ENCODE measurements at regions of chr7 and their contacts with region 1.

Region 1: DNA sequence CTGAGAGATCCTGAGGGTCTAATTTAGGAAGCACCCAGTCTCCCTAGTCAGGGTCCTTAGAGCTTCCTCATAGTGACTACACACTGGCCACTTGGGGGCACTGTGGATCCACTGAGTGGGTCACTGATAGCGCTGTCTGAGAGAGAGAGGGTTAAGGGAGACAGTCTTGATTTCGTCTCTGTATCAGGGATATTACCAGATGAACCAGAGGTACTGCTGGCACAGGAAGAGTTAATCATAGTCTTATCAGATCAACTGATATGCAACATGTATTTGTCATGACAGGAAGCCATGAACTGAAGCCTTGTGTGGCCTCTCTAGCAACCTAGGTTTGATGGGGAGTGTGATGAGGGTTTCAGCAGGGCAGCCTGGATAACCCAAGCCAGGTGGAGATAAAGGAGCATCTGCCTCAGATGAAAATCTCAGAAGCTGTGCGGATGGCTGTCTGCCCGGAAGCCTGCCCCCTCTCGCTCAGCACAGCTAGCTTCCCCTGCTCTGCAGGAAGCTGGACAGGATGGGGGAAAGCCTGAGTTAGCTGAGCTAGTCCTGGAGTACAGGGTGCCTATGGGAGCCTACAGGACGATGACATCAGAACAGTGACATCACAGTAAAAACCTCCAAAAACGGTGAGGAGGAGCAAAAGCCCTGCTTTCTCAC is 214.0 kb upstream of the PRSS1 start:
- DNase-seq: peak; percentile 76
- ATAC-seq: peak; percentile 100
- H3K4me3 ChIP-seq: no peak overlapping the region
- H3K27ac ChIP-seq: no peak overlapping the region
- H3K4me1 ChIP-seq: peaks cover 3 to 17% of the 10 kb centered on the region in 2 experiments; a peak in 3 of 4 replicates
- H3K27me3 ChIP-seq: no peaks in the 10 kb centered on the region
- CTCF ChIP-seq: peak; percentile 89 to 96 (median 90)
- POLR2A ChIP-seq: no peak
- RAD21 ChIP-seq: peak; percentile 96

Region 2: GRCh38 chr7:142263598-142264380 is 271.5 kb before region 1 on chr7:
- CTCF ChIA-PET with region 1: no interaction called
- POLR2A ChIA-PET with region 1: no interaction called
- RAD21 ChIA-PET with region 1: no interaction called
- intact Hi-C with region 1: no loop called
- DNase-seq: no peak
- ATAC-seq: no peak
- H3K4me3 ChIP-seq: no peak overlapping the region
- H3K27ac ChIP-seq: no peak overlapping the region
- H3K4me1 ChIP-seq: no peaks in the 10 kb centered on the region; a peak in 1 of 4 replicates
- H3K27me3 ChIP-seq: peaks cover 18% of the 10 kb centered on the region
- CTCF ChIP-seq: no peak
- POLR2A ChIP-seq: no peak
- RAD21 ChIP-seq: no peak

Region 3: DNA sequence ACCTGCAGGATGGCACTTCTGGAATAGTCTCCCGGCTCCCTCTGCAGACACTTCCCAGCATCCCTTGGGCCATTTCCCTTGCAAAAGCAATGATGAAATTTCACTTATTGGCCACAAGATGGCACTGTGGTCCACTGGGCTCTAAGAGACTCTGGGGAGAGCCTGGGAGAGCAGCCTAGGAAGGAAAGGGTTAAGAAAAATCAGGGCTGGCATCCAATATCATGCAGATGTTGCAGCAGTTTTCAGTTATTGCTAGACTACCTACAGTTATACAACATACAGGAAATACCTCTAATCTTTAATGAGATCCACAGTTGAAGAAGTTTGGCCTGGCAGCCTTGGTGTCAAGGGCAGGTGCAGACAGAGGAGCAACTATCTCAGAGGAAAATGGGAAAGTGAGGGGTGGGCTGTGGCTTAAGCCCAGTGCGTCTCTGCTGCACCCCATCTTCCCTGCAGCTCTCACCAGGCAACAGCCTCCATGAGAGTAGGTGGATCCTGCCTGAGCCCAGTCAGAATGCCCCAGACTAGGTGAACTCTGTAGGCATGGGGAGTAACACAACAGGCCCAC is 177.2 kb before region 1 on chr7:
- CTCF ChIA-PET with region 1: no interaction called
- POLR2A ChIA-PET with region 1: no interaction called
- RAD21 ChIA-PET with region 1: no interaction called
- intact Hi-C with region 1: no loop called
- DNase-seq: peak; percentile 73
- ATAC-seq: peak; percentile 97
- H3K4me3 ChIP-seq: no peak overlapping the region
- H3K27ac ChIP-seq: no peak overlapping the region
- H3K4me1 ChIP-seq: peaks cover 2 to 4% of the 10 kb centered on the region in 2 experiments; a peak in 3 of 4 replicates
- H3K27me3 ChIP-seq: no peaks in the 10 kb centered on the region
- CTCF ChIP-seq: peak; percentile 83 to 87 (median 84)
- POLR2A ChIP-seq: no peak
- RAD21 ChIP-seq: peak; percentile 69

Region 4: DNA sequence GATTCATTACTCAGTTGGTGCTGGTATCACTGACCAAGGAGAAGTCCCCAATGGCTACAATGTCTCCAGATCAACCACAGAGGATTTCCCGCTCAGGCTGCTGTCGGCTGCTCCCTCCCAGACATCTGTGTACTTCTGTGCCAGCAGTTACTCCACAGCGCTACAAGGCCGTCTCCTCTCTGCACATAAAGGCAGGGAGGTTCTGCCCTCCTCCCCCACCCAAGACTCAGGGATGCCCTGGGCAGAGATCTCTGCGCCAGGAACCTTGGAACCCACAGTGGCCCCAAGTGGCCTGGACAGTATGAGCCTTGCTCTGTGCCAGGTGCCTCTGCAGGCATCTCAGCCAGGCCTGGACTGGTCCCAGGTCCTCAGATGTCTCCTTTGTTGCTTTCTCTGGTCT is 84.0 kb before region 1 on chr7:
- CTCF ChIA-PET with region 1: no interaction called
- POLR2A ChIA-PET with region 1: no interaction called
- RAD21 ChIA-PET with region 1: no interaction called
- intact Hi-C with region 1: no loop called
- DNase-seq: no peak
- ATAC-seq: peak; percentile 30; the same call in 1 of the 2 replicates
- H3K4me3 ChIP-seq: no peak overlapping the region
- H3K27ac ChIP-seq: no peak overlapping the region
- H3K4me1 ChIP-seq: no peaks in the 10 kb centered on the region
- H3K27me3 ChIP-seq: no peaks in the 10 kb centered on the region
- CTCF ChIP-seq: no peak
- POLR2A ChIP-seq: no peak
- RAD21 ChIP-seq: no peak

Region 5: GRCh38 chr7:142523821-142524460 is 11.3 kb before region 1 on chr7:
- CTCF ChIA-PET with region 1: interaction called, 32 read pairs
- POLR2A ChIA-PET with region 1: no interaction called
- RAD21 ChIA-PET with region 1: no interaction called
- intact Hi-C with region 1: no loop called
- DNase-seq: no peak
- ATAC-seq: peak; percentile 49; the same call in 1 of the 2 replicates
- H3K4me3 ChIP-seq: no peak overlapping the region
- H3K27ac ChIP-seq: no peak overlapping the region
- H3K4me1 ChIP-seq: no peaks in the 10 kb centered on the region
- H3K27me3 ChIP-seq: no peaks in the 10 kb centered on the region
- CTCF ChIP-seq: peak in 2 of 3 experiments; percentile 23 to 25; a peak in 2 of 6 replicates
- POLR2A ChIP-seq: no peak
- RAD21 ChIP-seq: no peak

Region 6: GRCh38 chr7:142557971-142558582 is 22.8 kb after region 1 on chr7:
- CTCF ChIA-PET with region 1: interaction called, 22 read pairs
- POLR2A ChIA-PET with region 1: no interaction called
- RAD21 ChIA-PET with region 1: interaction called in 1 of 2 experiments, 3 read pairs
- intact Hi-C with region 1: no loop called
- DNase-seq: peak; percentile 51
- ATAC-seq: peak; percentile 84
- H3K4me3 ChIP-seq: no peak overlapping the region
- H3K27ac ChIP-seq: no peak overlapping the region
- H3K4me1 ChIP-seq: peaks cover 14 to 35% of the 10 kb centered on the region in 2 experiments
- H3K27me3 ChIP-seq: no peaks in the 10 kb centered on the region
- CTCF ChIP-seq: peak; percentile 83 to 96 (median 91)
- POLR2A ChIP-seq: no peak
- RAD21 ChIP-seq: peak; percentile 59

Region 7: DNA sequence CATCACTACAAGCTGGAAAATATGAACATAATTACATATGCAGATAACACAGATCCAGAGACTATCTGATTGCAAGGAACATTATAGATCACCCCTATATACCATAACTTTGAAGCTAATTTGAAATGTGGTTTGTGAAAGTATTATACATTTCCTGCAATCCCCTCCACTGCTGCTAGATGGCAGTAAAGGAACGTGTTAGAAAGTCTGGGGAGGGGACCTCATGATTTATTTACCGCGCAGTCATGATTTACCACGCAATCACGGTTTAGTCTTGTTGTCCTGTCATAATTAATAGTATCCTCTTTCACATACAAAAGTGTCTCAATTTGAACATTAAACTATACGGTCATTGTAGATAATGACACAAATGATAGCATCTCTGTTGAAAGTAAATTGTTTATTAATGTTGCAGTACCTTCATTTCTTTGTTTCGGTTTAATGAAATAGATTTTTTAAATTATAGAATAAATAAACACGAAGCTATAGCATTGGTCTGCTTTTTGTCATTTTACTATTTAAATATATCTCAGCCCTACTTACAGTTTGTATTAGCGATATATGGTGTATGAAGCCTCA is 68.7 kb after region 1 on chr7:
- CTCF ChIA-PET with region 1: interaction called, 27 read pairs
- POLR2A ChIA-PET with region 1: interaction called, 5 read pairs
- RAD21 ChIA-PET with region 1: interaction called, 3 to 5 read pairs
- intact Hi-C with region 1: no loop called
- DNase-seq: peak; percentile 53
- ATAC-seq: peak; percentile 81
- H3K4me3 ChIP-seq: no peak overlapping the region; a peak in 2 of 4 replicates
- H3K27ac ChIP-seq: no peak overlapping the region
- H3K4me1 ChIP-seq: peaks cover 0 to 7% of the 10 kb centered on the region in 2 experiments; a peak in 1 of 4 replicates
- H3K27me3 ChIP-seq: no peaks in the 10 kb centered on the region
- CTCF ChIP-seq: peak; percentile 78 to 92 (median 90)
- POLR2A ChIP-seq: no peak
- RAD21 ChIP-seq: peak; percentile 86

Region 8: DNA sequence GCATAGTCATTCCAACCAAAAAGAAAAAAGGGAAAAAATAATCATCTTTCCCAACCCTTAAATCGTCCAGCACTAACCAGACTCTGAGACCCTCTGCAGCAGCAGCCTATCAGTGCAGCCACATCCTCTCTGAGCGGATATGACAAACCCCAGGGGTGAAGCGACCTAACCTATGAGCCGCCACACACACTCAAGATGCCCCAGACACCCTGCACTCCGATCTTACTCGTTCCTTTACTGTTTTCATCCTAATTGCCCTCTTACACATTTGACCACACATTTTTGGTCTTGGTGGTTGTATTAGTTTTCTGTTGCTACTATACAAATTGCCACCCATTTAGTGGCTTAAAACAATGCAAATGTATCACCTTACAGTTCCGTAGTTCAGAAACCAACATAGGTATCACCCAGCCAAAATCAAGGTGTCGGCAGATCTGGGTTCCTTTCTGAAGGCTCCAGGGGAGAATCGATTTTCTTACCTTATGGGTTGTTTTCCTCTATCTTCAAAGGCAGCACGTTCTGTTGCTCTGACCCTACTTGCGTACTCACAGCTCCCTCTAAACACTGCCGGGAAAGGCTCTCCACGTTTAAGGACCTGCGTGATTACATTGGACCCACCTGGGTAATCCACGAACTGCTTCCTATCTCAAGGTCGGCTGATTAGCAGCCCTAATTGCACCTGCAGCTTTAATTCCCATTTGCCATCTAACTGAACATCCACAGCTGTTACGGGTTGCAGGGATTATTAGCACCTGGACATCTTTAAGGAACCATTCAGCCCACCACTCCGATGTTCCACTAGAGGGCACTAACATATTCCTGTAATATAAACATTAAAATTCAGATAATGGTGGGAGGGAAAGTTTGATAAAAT is 176.7 kb after region 1 on chr7:
- CTCF ChIA-PET with region 1: interaction called, 7 read pairs
- POLR2A ChIA-PET with region 1: no interaction called
- RAD21 ChIA-PET with region 1: interaction called in 1 of 2 experiments, 3 read pairs
- intact Hi-C with region 1: loop called (anchors 5 kb)
- DNase-seq: peak; percentile 29
- ATAC-seq: peak; percentile 85
- H3K4me3 ChIP-seq: no peak overlapping the region
- H3K27ac ChIP-seq: no peak overlapping the region
- H3K4me1 ChIP-seq: no peaks in the 10 kb centered on the region
- H3K27me3 ChIP-seq: peaks cover 8% of the 10 kb centered on the region; the same call in 1 of the 2 replicates
- CTCF ChIP-seq: peak; percentile 71 to 73 (median 72)
- POLR2A ChIP-seq: no peak
- RAD21 ChIP-seq: peak; percentile 52

Region 9: DNA sequence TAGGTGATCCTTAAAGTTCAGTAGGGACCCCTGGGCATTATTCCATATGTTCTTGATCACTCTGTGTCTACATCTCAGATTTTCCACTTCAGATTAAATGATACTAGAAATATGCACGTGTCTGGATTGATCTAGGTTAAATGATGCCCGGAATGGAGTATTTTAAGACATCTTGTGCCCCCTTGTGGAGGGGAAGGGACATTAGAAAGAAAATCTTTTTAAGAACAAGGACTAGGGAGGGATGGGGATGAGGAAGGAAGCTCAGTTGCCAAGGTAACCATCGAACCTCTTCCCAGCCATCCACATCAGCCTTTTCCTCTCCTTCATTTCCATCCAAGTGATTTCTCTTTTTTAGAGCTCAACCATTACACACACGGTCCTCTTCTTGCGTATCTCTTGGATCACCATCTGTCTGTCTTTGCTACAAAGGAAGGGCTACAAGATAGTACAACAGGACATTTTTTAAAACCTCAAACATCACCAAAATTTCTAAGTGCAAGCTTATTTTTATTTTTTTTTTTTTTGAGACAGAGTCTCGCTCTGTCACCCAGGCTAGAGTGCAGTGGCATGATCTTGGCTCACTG is 276.0 kb after region 1 on chr7:
- CTCF ChIA-PET with region 1: interaction called, 17 read pairs
- POLR2A ChIA-PET with region 1: no interaction called
- RAD21 ChIA-PET with region 1: no interaction called
- intact Hi-C with region 1: loop called (anchors 10 kb)
- DNase-seq: peak; percentile 39
- ATAC-seq: peak; percentile 77
- H3K4me3 ChIP-seq: no peak overlapping the region
- H3K27ac ChIP-seq: no peak overlapping the region
- H3K4me1 ChIP-seq: peaks cover 0 to 24% of the 10 kb centered on the region in 2 experiments; a peak in 3 of 4 replicates
- H3K27me3 ChIP-seq: peaks cover 35% of the 10 kb centered on the region; the same call in 1 of the 2 replicates
- CTCF ChIP-seq: peak; percentile 57 to 80 (median 71)
- POLR2A ChIP-seq: no peak
- RAD21 ChIP-seq: peak; percentile 74